Dorsolateral prefrontal cortex (tissue), 120 donors: ENCODE measurements at regions of chr1 and their contacts with region 1.

Region 1: GRCh38 chr1:13960375-13960987 is 260.5 kb downstream of the PRDM2 start:
- DNase-seq: peak; percentile 56 to 84 (median 70)
- H3K4me3 ChIP-seq: no peak overlapping the region
- H3K27ac ChIP-seq: no peak overlapping the region
- H3K27me3 ChIP-seq: no peaks in the 10 kb centered on the region
- CTCF ChIP-seq: peak; percentile 89 to 99 (median 97)

Region 2: DNA sequence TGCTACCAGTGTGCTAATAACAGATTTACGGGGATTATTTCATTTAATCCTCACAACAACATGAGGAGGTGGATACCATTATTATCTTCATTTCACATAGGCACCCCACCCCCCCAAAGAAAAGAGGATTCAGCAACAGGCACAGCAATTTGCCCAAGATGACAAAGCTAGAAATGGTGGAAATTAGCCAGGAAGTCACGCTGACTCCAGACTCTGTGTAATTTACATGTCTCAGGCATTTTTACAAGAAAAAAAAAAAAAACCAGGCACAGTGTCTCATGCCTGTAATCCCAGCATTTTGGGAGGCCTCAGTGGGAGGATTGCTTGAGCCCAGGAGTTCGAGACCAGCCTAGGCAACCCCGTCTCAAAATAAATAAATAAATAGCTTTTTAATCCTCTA is 298.0 kb before region 1 on chr1:
- intact Hi-C with region 1: loop called (anchors 2 kb)
- DNase-seq: no peak
- H3K4me3 ChIP-seq: no peak overlapping the region
- H3K27ac ChIP-seq: no peak overlapping the region
- H3K27me3 ChIP-seq: no peaks in the 10 kb centered on the region
- CTCF ChIP-seq: no peak

Region 3: DNA sequence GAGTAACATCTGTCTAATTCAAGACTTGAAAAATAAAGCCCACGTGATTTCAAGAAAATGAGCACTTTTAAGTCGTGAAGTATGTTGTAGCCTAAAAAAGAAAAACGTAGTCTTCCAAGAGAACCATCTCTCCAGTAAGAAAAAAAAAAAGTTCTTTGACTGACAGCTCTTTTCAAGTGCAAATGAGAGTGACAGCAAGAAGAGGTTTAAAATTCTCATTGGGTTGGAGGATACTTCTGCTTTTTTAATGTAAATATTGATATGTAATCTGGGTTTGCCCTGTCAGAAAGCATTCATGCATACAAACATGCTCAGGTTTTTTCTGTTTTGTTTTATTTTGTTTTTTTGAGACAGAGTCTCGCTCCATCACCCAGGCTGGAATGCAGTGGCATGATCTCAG is 292.8 kb before region 1 on chr1:
- intact Hi-C with region 1: loop called (anchors 2 kb)
- DNase-seq: no peak
- H3K4me3 ChIP-seq: no peak overlapping the region
- H3K27ac ChIP-seq: no peak overlapping the region
- H3K27me3 ChIP-seq: no peaks in the 10 kb centered on the region
- CTCF ChIP-seq: no peak

Region 4: DNA sequence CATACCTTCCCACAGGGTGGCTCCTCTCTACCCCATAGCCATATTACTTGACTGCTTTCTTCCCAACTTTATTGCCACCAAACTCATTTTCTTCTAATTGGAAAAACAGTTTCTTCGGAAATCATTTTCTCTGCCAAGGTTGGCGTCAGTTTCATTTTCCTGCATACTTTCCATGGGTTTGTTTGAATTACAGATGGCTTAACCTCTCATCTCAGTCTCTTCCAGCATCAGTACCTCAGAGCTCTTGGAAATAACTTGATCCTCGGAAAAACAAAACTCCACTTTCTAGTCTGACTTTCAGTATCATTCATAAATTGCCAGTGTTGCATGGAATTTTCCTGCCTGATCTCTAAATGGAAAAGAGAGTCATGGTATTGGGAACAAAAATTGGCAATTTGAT is 280.8 kb before region 1 on chr1:
- intact Hi-C with region 1: no loop called
- DNase-seq: no peak
- H3K4me3 ChIP-seq: no peak overlapping the region
- H3K27ac ChIP-seq: no peak overlapping the region
- H3K27me3 ChIP-seq: no peaks in the 10 kb centered on the region
- CTCF ChIP-seq: no peak

Region 5: GRCh38 chr1:13976485-13976884 is 16.0 kb after region 1 on chr1:
- intact Hi-C with region 1: no loop called
- DNase-seq: no peak
- H3K4me3 ChIP-seq: no peak overlapping the region
- H3K27ac ChIP-seq: no peak overlapping the region
- H3K27me3 ChIP-seq: no peaks in the 10 kb centered on the region
- CTCF ChIP-seq: no peak

Region 6: GRCh38 chr1:14915356-14916054 is 955.0 kb after region 1 on chr1:
- intact Hi-C with region 1: loop called in 1 of 2 experiments (anchors 10 kb)
- DNase-seq: peak in 7 of 10 donors; percentile 42 to 68 (median 58)
- H3K4me3 ChIP-seq: no peak overlapping the region
- H3K27ac ChIP-seq: no peak overlapping the region
- H3K27me3 ChIP-seq: no peaks in the 10 kb centered on the region
- CTCF ChIP-seq: peak; percentile 67 to 94 (median 86)

Region 7: DNA sequence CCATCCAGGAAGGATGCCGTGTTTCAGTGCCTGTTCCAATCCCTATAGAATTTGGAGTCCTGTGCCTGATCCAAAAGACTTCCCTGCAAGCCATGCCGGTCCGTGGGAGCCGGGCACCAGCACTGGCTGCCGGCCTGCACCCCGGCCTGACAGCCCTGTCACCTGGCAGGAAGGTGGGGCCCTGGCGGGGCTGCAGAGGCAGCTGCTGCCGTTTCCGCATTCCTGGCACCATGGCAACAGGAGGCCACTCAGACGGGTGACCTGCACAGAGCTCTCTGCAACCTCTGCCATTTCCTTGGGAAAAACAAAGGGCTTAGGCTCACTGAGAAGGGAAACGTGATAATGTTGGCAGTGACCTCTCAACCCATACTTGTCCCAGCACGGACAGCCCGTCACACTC is 1129.9 kb after region 1 on chr1:
- intact Hi-C with region 1: loop called in 1 of 2 experiments (anchors 10 kb)
- DNase-seq: peak in 1 of 10 donors; percentile 64
- H3K4me3 ChIP-seq: no peak overlapping the region
- H3K27ac ChIP-seq: peak overlapping the region in 1 of 59 donors; percentile 4
- H3K27me3 ChIP-seq: no peaks in the 10 kb centered on the region
- CTCF ChIP-seq: no peak